ENCODE measurements at regions of chr5 and their contacts with region 1.

Region 1: DNA sequence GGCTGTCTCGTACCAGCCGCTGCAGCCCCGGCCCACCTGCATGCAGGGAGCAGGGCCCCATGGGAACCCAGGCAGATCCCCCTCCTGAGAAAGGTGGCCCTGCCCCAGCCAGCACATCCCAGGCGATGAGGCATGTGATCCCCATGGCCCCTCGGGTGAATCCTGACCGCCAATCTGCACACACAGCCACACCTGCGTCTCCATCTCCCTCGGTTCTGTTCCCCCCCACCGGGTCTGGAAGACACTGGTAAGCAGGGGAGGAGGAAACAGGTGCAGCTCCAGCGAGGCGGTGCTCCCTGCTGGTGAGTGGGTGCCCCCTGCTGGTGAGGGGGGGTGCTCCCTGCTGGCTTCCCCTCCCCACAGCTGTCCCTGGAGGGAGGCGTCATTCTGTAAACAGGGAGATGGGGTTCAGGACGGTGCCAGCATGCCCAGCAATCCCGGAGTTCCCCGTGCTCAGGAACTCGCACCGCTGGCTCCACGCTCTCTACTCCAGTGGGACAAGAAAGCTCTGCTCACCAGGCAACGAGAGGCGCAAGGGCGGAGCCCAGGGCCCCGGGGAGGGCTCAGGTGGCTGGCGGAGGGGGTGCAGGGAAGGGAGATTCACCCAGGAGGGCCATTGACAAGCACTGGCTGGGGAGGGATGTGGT is 28.4 kb upstream of the SLC12A7 start:
- DNase-seq: peak; percentile 72 to 89 (median 80)
- ATAC-seq: peak; percentile 98
- H3K4me3 ChIP-seq: no peak overlapping the region
- H3K4me3 Mint-ChIP-seq: no peak overlapping the region
- H3K27ac ChIP-seq: no peak overlapping the region
- H3K27ac Mint-ChIP-seq: no peak overlapping the region
- H3K4me1 ChIP-seq: peaks cover 13% of the 10 kb centered on the region
- H3K4me1 Mint-ChIP-seq: peaks cover 11% of the 10 kb centered on the region
- H3K27me3 ChIP-seq: peaks cover 0 to 6% of the 10 kb centered on the region in 2 experiments
- H3K27me3 Mint-ChIP-seq: peaks cover 5% of the 10 kb centered on the region
- CTCF ChIP-seq: peak; percentile 86

Region 2: DNA sequence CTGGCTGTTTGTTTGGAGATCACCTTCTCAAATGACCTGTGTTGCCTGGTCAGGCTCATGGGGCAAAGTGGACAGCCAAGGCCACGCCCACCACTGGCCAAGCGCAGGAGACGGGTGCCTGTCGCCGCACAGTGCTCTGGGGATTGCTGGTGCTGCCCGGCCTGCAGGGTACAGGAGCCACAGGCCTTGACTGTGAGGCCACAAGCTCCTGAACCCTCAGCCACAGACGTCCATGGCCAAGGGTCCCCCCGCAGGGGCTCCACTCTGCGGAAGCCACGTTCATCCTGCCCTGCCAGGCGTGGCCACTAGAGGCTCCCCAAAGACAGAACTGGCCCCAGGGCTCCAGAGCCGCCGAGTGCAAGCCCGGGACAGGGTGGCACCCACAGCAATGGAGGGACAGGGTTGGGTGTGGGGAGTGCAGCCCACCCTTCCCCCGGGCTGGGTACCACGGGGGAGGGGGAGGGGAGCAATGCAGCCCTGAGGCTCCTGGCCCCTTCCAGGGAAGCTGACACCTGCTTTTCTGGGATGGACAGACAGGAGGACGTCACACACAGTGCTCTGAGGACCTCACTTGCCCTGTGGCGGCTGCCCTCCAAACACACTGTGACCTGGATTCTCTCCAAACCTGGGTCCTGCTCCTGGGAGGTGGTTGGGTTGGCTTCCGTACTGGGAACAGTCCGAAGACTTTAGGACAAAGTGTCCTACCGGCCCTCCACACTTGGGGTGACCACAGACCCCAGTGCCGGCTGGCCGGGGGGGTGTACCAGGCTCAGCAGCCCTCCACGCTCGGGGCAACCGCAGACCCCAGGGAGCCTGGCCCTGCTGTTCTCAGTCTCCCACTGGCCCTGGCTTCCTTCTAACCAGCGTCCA is 468.6 kb before region 1 on chr5:
- CTCF ChIA-PET with region 1: no interaction called
- POLR2A ChIA-PET with region 1: interaction called, 3 read pairs
- intact Hi-C with region 1: loop called in 1 of 2 experiments (anchors 5 kb)
- DNase-seq: peak; percentile 58 to 85 (median 67)
- ATAC-seq: peak; percentile 69
- H3K4me3 ChIP-seq: peak overlapping the region; percentile 36
- H3K4me3 Mint-ChIP-seq: no peak overlapping the region
- H3K27ac ChIP-seq: peak overlapping the region in 1 of 2 donors; percentile 68
- H3K27ac Mint-ChIP-seq: peak overlapping the region; percentile 95
- H3K4me1 ChIP-seq: peaks cover 37% of the 10 kb centered on the region
- H3K4me1 Mint-ChIP-seq: peaks cover 9% of the 10 kb centered on the region
- H3K27me3 ChIP-seq: no peaks in the 10 kb centered on the region
- H3K27me3 Mint-ChIP-seq: peaks cover 12% of the 10 kb centered on the region
- CTCF ChIP-seq: peak; percentile 89

Region 3: DNA sequence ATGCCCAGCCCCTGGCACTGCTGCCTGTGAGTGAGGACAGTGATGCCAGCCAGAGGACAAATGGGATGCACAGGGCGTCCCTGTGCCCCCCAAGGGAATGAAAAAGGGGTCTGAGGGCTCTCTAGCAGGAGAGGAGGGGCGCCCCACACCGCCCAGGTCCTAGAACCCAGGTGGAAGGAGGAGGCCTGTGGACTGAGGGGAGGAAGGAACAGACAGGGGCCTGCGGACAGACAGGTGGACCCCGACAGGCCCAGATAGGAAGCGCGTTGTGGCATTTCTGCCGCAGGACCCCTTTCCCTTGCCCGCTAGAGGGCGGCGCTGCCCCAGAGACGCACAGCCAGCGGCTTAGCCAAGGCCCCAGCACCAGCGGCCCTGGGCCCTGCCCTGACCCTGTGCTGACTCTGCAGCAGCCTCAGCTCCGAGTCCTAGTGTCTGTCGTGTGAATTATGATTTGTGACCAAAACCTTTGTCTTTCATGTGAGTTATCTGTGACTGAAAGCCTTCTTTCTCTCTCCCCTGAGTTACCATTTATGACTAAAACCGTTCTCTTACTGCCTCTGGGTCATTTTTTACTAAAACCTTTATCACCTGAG is 216.9 kb before region 1 on chr5:
- CTCF ChIA-PET with region 1: interaction called, 6 read pairs
- POLR2A ChIA-PET with region 1: interaction called, 3 read pairs
- intact Hi-C with region 1: loop called in 1 of 2 experiments (anchors 1 kb)
- DNase-seq: peak; percentile 52 to 82 (median 63)
- ATAC-seq: peak; percentile 69
- H3K4me3 ChIP-seq: no peak overlapping the region
- H3K4me3 Mint-ChIP-seq: no peak overlapping the region
- H3K27ac ChIP-seq: no peak overlapping the region
- H3K27ac Mint-ChIP-seq: no peak overlapping the region
- H3K4me1 ChIP-seq: peaks cover 13% of the 10 kb centered on the region
- H3K4me1 Mint-ChIP-seq: peaks cover 5% of the 10 kb centered on the region
- H3K27me3 ChIP-seq: peaks cover 12 to 26% of the 10 kb centered on the region in 2 experiments
- H3K27me3 Mint-ChIP-seq: peaks cover 40% of the 10 kb centered on the region
- CTCF ChIP-seq: peak; percentile 88

Region 4: GRCh38 chr5:989961-990530 is 150.2 kb before region 1 on chr5:
- CTCF ChIA-PET with region 1: interaction called, 3 read pairs
- POLR2A ChIA-PET with region 1: no interaction called
- intact Hi-C with region 1: loop called in 1 of 2 experiments (anchors 1 kb)
- DNase-seq: peak in 2 of 14 experiments; percentile 21 to 23
- ATAC-seq: no peak
- H3K4me3 ChIP-seq: no peak overlapping the region
- H3K4me3 Mint-ChIP-seq: no peak overlapping the region
- H3K27ac ChIP-seq: no peak overlapping the region
- H3K27ac Mint-ChIP-seq: no peak overlapping the region
- H3K4me1 ChIP-seq: no peaks in the 10 kb centered on the region
- H3K4me1 Mint-ChIP-seq: peaks cover 3% of the 10 kb centered on the region
- H3K27me3 ChIP-seq: peaks cover 7 to 23% of the 10 kb centered on the region in 2 experiments
- H3K27me3 Mint-ChIP-seq: peaks cover 46% of the 10 kb centered on the region
- CTCF ChIP-seq: no peak

Region 5: GRCh38 chr5:1004461-1005248 is 135.6 kb before region 1 on chr5:
- CTCF ChIA-PET with region 1: no interaction called
- POLR2A ChIA-PET with region 1: no interaction called
- intact Hi-C with region 1: loop called in 1 of 2 experiments (anchors 2 kb)
- DNase-seq: peak; percentile 29 to 77 (median 48)
- ATAC-seq: peak; percentile 74
- H3K4me3 ChIP-seq: peak overlapping the region; percentile 50
- H3K4me3 Mint-ChIP-seq: peak overlapping the region; percentile 87
- H3K27ac ChIP-seq: no peak overlapping the region
- H3K27ac Mint-ChIP-seq: no peak overlapping the region
- H3K4me1 ChIP-seq: peaks cover 36% of the 10 kb centered on the region
- H3K4me1 Mint-ChIP-seq: peaks cover 24% of the 10 kb centered on the region
- H3K27me3 ChIP-seq: peaks cover 30 to 37% of the 10 kb centered on the region in 2 experiments
- H3K27me3 Mint-ChIP-seq: peaks cover 24% of the 10 kb centered on the region
- CTCF ChIP-seq: peak; percentile 55

Region 6: GRCh38 chr5:1052641-1053390 is 87.5 kb before region 1 on chr5:
- CTCF ChIA-PET with region 1: no interaction called
- POLR2A ChIA-PET with region 1: no interaction called
- intact Hi-C with region 1: loop called (anchors 5 kb)
- DNase-seq: no peak
- ATAC-seq: no peak
- H3K4me3 ChIP-seq: no peak overlapping the region
- H3K4me3 Mint-ChIP-seq: no peak overlapping the region
- H3K27ac ChIP-seq: no peak overlapping the region
- H3K27ac Mint-ChIP-seq: no peak overlapping the region
- H3K4me1 ChIP-seq: no peaks in the 10 kb centered on the region
- H3K4me1 Mint-ChIP-seq: no peaks in the 10 kb centered on the region
- H3K27me3 ChIP-seq: no peaks in the 10 kb centered on the region
- H3K27me3 Mint-ChIP-seq: no peaks in the 10 kb centered on the region
- CTCF ChIP-seq: no peak

Region 7: DNA sequence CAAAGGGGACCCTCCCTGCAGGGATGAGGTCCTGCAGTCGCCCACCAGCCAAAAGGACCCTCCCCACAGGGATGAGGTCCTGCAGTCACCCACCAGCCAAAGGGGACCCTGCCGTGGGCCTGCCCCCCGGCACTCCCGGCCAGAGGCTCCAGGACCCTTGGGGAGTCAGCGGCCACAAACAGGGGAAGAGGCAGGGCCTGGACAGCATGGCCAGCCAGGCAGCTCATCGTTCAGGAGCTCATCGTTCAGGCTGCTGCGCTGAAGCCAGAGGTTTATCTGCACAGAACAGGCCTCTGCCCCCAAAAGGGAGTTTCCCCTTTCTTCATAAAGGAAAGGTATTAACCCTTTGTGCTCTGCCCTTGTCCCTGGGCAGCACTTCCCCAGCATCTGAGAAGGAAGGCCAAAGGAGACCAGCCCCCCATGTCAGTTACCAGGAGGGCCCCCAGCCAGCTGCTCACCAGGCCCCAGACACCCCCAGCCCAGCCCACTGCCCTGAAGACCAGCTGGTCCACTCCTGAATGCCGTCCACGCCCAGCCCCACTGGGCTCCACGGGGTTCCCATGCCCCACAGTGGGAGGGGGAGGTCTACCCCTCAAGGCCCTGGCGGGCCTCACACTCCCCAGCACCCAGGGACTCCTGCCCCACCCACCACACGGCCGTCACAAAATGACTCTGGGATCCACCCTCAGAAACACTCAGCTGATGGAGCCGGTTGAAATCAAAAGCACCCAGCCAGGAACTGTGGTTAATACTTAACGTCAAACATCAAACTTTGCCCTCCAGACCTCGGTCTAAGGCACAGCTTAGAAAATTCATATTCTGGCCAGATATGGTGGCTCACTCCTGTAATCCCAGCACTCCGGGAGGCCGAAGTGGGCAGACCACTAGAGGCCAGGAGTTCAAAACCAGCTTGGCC is 34.7 kb before region 1 on chr5:
- CTCF ChIA-PET with region 1: interaction called, 3 read pairs
- POLR2A ChIA-PET with region 1: no interaction called
- intact Hi-C with region 1: loop called (anchors 1 to 2 kb)
- DNase-seq: peak in 13 of 14 experiments; percentile 16 to 93 (median 53)
- ATAC-seq: peak; percentile 77
- H3K4me3 ChIP-seq: peak overlapping the region; percentile 52
- H3K4me3 Mint-ChIP-seq: peak overlapping the region; percentile 91
- H3K27ac ChIP-seq: peak overlapping the region; percentile 62 to 81
- H3K27ac Mint-ChIP-seq: peak overlapping the region; percentile 99
- H3K4me1 ChIP-seq: peaks cover 100% of the 10 kb centered on the region
- H3K4me1 Mint-ChIP-seq: peaks cover 87% of the 10 kb centered on the region
- H3K27me3 ChIP-seq: no peaks in the 10 kb centered on the region
- H3K27me3 Mint-ChIP-seq: no peaks in the 10 kb centered on the region
- CTCF ChIP-seq: no peak

Region 8: GRCh38 chr5:1246711-1247431 is 106.6 kb after region 1 on chr5:
- CTCF ChIA-PET with region 1: no interaction called
- POLR2A ChIA-PET with region 1: no interaction called
- intact Hi-C with region 1: no loop called
- DNase-seq: peak in 5 of 14 experiments; percentile 5 to 35 (median 33)
- ATAC-seq: no peak
- H3K4me3 ChIP-seq: no peak overlapping the region
- H3K4me3 Mint-ChIP-seq: no peak overlapping the region
- H3K27ac ChIP-seq: no peak overlapping the region
- H3K27ac Mint-ChIP-seq: no peak overlapping the region
- H3K4me1 ChIP-seq: no peaks in the 10 kb centered on the region
- H3K4me1 Mint-ChIP-seq: peaks cover under 1% of the 10 kb centered on the region
- H3K27me3 ChIP-seq: peaks cover 15 to 20% of the 10 kb centered on the region in 2 experiments
- H3K27me3 Mint-ChIP-seq: peaks cover 4% of the 10 kb centered on the region
- CTCF ChIP-seq: no peak

Measured in CD4-positive, alpha-beta T cell (primary cell).